Sigmoid colon (tissue), 7 donors: ENCODE measurements at regions of chr1 and their contacts with region 1.

Region 1: DNA sequence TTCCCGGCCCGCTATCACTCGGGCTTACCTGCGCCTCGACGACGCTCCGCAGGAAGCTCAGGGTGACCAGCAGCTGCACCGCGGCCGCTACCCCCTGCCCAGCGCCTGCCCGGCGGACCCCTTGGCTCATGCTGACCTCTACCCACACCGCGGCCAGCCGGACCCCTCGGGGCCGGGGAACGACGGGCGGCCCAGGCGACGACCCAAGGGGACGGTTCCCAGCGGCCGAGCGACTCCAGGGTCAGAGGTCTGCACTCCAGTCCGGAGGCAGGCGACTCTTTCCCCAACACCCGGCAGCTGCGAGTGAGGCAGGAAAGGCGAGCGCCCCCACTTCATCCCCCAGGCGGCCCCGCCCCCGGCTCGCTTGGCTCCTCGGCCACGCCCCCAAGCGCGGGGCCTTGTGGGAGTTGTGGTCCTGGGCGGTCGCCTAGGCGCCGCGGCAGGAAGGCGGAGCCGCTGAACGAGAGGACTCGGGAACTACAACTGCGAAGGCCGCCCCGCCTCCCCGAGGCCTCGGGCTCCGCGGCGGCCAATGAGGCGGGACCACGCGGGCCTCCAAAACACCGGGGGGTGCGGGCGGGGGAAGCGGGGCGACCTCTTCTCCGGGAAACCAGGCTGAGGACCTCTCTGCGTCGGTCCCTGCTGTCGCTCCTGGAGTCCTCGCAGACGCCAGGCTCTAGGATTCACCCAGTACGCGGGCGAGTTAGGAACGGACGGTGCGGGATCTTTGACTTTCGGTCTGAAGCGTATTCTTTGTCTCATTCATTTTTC is at the start of gene ERO1B:
- DNase-seq: peak; percentile 98
- H3K4me3 ChIP-seq: peak within 1 kb of the TSS; percentile 82 to 98 (median 94)
- H3K27ac ChIP-seq: peak within 1 kb of the TSS; percentile 87 to 92 (median 90)
- H3K4me1 ChIP-seq: peaks cover 0 to 16% (median 11%) of the 10 kb centered on the region in 4 donors
- H3K27me3 ChIP-seq: no peaks in the 10 kb centered on the region
- CTCF ChIP-seq: no peak
- EP300 ChIP-seq: peak in 1 of 4 donors; percentile 21
- POLR2A ChIP-seq: peak; percentile 80 to 91
- total RNA-seq, gene ERO1B: 9.0 to 17.2 (median 13.7) TPM

Region 2: GRCh38 chr1:236142253-236143103 is 139.4 kb before region 1 on chr1 and contains the start of gene GPR137B:
- intact Hi-C with region 1: loop called (anchors 5 kb)
- DNase-seq: no peak
- H3K4me3 ChIP-seq: peak within 1 kb of the TSS; percentile 60 to 91 (median 80)
- H3K27ac ChIP-seq: peak within 1 kb of the TSS; percentile 46 to 69 (median 66)
- H3K4me1 ChIP-seq: peaks cover 0 to 27% (median 17%) of the 10 kb centered on the region in 4 donors
- H3K27me3 ChIP-seq: no peaks in the 10 kb centered on the region
- CTCF ChIP-seq: no peak
- EP300 ChIP-seq: no peak
- POLR2A ChIP-seq: no peak
- total RNA-seq, gene GPR137B: 9.2 to 25.5 (median 19.0) TPM

Region 3: DNA sequence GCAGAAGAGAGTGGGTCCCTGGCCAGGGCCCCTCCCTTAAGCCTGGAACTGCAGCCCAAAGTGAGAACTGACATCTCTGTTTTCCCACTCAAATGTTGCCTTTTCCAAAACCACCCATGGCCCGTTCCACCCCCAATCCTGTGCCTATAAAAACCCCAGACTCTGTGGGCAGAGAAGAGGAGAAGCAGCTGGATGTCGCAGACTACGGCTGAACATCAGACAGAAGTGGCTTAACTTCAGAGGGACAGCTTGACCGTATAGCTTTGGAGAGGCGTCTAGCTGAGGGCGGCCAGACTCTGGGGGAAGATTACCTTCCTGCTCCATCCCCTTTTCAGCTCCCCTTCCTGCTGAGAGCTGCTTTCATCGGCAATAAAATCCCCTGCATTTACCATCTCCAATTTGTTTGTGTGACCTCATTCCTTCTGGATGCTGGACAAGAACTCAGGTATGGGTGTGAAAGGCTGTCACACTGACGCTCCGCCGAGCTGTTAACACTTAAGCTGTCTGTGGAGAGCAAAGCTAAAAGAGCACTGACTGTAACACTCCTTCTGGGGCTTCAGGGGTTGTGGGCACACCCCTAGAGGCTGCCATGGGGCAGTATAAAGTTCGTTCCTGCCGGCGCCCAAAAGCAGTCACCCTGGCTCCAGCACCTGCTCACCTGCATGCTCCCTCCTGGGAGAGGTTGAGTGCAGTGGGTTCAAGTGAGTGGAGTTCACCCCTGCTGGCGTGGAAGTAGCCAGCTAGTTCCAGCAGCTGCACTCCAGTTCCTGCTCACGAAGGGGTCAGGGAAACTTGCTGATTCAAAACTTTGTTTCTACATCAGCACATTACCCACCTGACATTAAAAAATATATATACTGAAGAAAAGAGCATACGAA is 19.5 kb after region 1 on chr1:
- intact Hi-C with region 1: no loop called
- DNase-seq: no peak
- H3K4me3 ChIP-seq: no peak overlapping the region
- H3K27ac ChIP-seq: no peak overlapping the region
- H3K4me1 ChIP-seq: no peaks in the 10 kb centered on the region
- H3K27me3 ChIP-seq: no peaks in the 10 kb centered on the region
- CTCF ChIP-seq: no peak
- EP300 ChIP-seq: no peak
- POLR2A ChIP-seq: no peak

Region 4: DNA sequence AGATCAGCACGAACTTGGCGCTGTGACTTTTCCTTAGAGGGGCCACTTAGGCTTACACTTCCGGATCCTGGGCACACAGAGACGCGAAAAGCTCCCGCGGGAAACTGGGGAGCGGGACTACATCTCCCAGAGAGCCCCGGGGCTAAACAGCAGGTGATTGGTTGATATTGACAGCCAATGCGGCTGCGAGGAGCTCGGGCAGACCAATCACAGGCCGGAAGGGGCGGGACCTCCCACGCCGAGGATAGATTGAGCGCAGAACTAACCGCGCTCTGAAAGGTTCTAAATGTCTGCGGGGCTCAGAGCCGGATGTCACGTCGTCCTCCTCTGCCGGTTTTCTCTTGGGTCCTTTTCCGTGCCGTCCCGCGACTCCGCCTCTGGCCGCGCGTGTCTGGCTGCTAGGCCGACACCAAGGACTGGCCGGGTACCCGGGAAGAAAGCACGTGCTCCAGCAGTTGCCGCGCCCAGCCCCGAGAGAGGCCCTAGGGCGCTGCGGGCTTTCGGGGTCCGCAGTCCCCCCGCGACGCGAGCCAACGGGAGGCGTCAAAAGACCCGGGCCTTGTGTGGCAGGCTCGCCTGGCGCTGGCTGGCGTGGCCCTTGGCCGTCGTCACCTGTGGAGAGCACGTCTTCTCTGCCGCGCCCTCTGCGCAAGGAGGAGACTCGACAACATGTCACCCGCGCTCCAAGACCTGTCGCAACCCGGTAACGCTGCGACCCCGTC is 513.4 kb after region 1 on chr1 and contains the start of gene MTR:
- intact Hi-C with region 1: loop called (anchors 10 kb)
- DNase-seq: peak; percentile 99
- H3K4me3 ChIP-seq: peak within 1 kb of the TSS; percentile 62 to 97 (median 73)
- H3K27ac ChIP-seq: peak within 1 kb of the TSS; percentile 88 to 97 (median 92)
- H3K4me1 ChIP-seq: peaks cover 0 to 34% (median 27%) of the 10 kb centered on the region in 4 donors
- H3K27me3 ChIP-seq: no peaks in the 10 kb centered on the region
- CTCF ChIP-seq: no peak
- EP300 ChIP-seq: no peak
- POLR2A ChIP-seq: peak; percentile 71 to 83
- total RNA-seq, gene MTR: 28.2 to 38.4 (median 30.7) TPM

Region 5: DNA sequence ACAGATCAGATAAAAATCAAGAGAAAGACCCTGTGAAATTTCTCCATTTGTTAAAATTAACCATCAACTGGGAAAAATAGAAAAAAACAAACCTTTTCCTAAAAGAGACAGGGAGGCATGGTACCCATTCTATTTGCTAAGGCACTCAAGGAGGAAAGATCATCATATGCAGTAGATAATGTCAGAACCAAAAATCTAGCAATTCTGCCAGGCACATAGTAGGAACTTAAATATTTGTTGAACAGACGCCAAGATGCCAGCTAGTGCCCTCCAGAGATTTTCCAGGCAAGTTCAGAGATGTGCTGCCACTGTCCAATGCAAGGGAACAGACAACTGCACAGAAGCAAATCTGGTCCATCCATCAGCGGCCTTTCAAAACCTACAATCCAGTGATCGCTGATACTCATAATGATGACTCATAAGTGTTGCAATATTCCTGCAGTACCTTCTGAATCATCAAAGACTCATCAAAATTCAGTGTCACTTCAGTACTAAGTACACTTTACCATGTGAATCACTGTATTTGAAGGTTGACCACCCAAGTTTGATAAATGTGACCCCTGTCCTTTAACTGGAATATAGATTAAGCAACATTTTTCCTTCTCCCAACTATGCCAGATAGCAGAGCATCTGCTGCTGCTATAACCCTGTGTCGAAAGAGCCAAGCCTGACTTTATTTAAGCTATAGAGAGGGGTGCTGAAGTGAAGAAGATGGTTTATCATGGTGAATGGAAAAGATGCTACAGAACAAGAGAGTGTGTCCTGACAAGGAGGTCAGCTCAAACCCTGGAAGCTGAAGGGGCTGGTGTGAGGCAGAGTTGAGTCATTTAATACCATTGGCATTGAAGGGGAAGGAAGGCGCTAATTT is 623.3 kb after region 1 on chr1:
- intact Hi-C with region 1: no loop called
- DNase-seq: no peak
- H3K4me3 ChIP-seq: no peak overlapping the region
- H3K27ac ChIP-seq: no peak overlapping the region
- H3K4me1 ChIP-seq: peaks cover 0 to 19% (median 9%) of the 10 kb centered on the region in 4 donors
- H3K27me3 ChIP-seq: no peaks in the 10 kb centered on the region
- CTCF ChIP-seq: no peak
- EP300 ChIP-seq: no peak
- POLR2A ChIP-seq: no peak